A549 (cell line): ENCODE measurements at regions of chr12 and their contacts with region 1.

Region 1: DNA sequence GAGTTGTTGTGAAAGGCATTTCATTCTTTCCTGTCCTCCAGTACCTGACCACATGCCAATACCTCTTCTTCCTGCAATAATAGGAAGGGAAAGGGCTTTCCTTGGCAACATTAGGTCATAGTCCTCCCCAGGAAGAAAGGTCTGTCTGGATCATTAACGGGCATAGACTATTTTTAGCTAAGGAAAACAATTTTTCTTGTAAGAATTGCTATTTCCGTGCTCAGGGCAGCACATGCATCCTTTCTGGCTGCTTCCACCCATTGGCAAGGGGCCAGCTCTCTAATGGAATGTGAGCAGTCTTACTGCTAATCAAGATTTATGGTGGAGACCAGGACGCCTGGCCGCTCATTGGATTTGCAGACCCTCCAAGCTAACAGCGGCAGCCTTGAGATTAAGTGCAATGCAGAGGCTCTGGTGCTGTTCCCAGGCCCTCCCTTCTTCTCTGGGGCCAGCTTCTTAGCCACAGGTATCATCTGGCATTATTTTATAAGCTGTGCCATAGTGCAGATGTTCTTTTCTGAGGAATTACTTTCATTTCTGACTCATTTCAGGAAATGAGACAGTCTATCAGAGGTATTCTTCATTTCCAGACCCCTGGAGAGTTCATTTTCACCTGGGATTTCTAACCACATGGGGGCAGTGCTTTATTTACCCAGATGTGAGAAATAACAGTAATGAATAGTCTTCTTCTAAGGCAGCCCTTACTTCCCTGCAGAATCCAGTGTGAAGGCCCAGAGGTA is 52.9 kb downstream of the ANO6 start:
- DNase-seq: peak; percentile 35 to 64
- ATAC-seq: peak; percentile 63 to 71
- H3K4me3 ChIP-seq: no peak overlapping the region
- H3K27ac ChIP-seq: peak overlapping the region; percentile 55 to 68
- H3K4me1 ChIP-seq: peaks cover 49% of the 10 kb centered on the region
- CTCF ChIP-seq: peak; percentile 73
- EP300 ChIP-seq: no peak
- POLR2A ChIP-seq: no peak
- RAD21 ChIP-seq: peak; percentile 69

Region 2: GRCh38 chr12:45183246-45183645 is 85.6 kb before region 1 on chr12:
- CTCF ChIA-PET with region 1: interaction called, 10 read pairs
- POLR2A ChIA-PET with region 1: no interaction called
- DNase-seq: peak; percentile 12 to 13
- ATAC-seq: peak in 1 of 2 experiments; percentile 54; a peak in 2 of 6 replicates
- H3K4me3 ChIP-seq: no peak overlapping the region
- H3K27ac ChIP-seq: no peak overlapping the region
- H3K4me1 ChIP-seq: no peaks in the 10 kb centered on the region
- CTCF ChIP-seq: peak; percentile 52
- EP300 ChIP-seq: no peak
- POLR2A ChIP-seq: no peak
- RAD21 ChIP-seq: peak; percentile 72 to 73

Region 3: GRCh38 chr12:45234139-45234846 is 34.5 kb before region 1 on chr12:
- CTCF ChIA-PET with region 1: interaction called, 26 read pairs
- POLR2A ChIA-PET with region 1: interaction called, 3 read pairs
- DNase-seq: peak; percentile 84 to 91
- ATAC-seq: peak; percentile 77 to 79
- H3K4me3 ChIP-seq: peak overlapping the region; percentile 7; the same call in 1 of the 3 replicates
- H3K27ac ChIP-seq: peak overlapping the region; percentile 84 to 85
- H3K4me1 ChIP-seq: peaks cover 50% of the 10 kb centered on the region
- CTCF ChIP-seq: no peak
- EP300 ChIP-seq: peak in 1 of 2 experiments; percentile 66; a peak in 1 of 5 replicates
- POLR2A ChIP-seq: no peak
- RAD21 ChIP-seq: peak; percentile 18 to 39; a peak in 3 of 5 replicates

Region 4: GRCh38 chr12:45242189-45242588 is 26.7 kb before region 1 on chr12:
- CTCF ChIA-PET with region 1: interaction called, 12 read pairs
- POLR2A ChIA-PET with region 1: no interaction called
- DNase-seq: no peak
- ATAC-seq: no peak
- H3K4me3 ChIP-seq: no peak overlapping the region
- H3K27ac ChIP-seq: no peak overlapping the region
- H3K4me1 ChIP-seq: no peaks in the 10 kb centered on the region; the same call in 2 of the 3 replicates
- CTCF ChIP-seq: no peak
- EP300 ChIP-seq: no peak
- POLR2A ChIP-seq: no peak
- RAD21 ChIP-seq: no peak

Region 5: GRCh38 chr12:45279931-45280830 is 11.3 kb after region 1 on chr12:
- CTCF ChIA-PET with region 1: interaction called, 12 read pairs
- POLR2A ChIA-PET with region 1: no interaction called
- DNase-seq: no peak
- ATAC-seq: no peak
- H3K4me3 ChIP-seq: no peak overlapping the region
- H3K27ac ChIP-seq: peak overlapping the region in 1 of 2 experiments; percentile 18; a peak in 1 of 6 replicates
- H3K4me1 ChIP-seq: peaks cover 50% of the 10 kb centered on the region
- CTCF ChIP-seq: no peak
- EP300 ChIP-seq: no peak
- POLR2A ChIP-seq: no peak
- RAD21 ChIP-seq: no peak

Region 6: GRCh38 chr12:45290204-45290580 is 21.4 kb after region 1 on chr12:
- CTCF ChIA-PET with region 1: interaction called, 27 read pairs
- POLR2A ChIA-PET with region 1: no interaction called
- DNase-seq: peak in 1 of 2 experiments; percentile 38
- ATAC-seq: peak in 1 of 2 experiments; percentile 54; a peak in 3 of 6 replicates
- H3K4me3 ChIP-seq: no peak overlapping the region
- H3K27ac ChIP-seq: no peak overlapping the region
- H3K4me1 ChIP-seq: peaks cover 33% of the 10 kb centered on the region
- CTCF ChIP-seq: no peak
- EP300 ChIP-seq: no peak
- POLR2A ChIP-seq: no peak
- RAD21 ChIP-seq: no peak

Region 7: GRCh38 chr12:45324391-45324790 is 55.5 kb after region 1 on chr12:
- CTCF ChIA-PET with region 1: no interaction called
- POLR2A ChIA-PET with region 1: no interaction called
- DNase-seq: no peak
- ATAC-seq: no peak
- H3K4me3 ChIP-seq: no peak overlapping the region
- H3K27ac ChIP-seq: no peak overlapping the region
- H3K4me1 ChIP-seq: no peaks in the 10 kb centered on the region
- CTCF ChIP-seq: no peak
- EP300 ChIP-seq: no peak
- POLR2A ChIP-seq: no peak
- RAD21 ChIP-seq: no peak

Region 8: DNA sequence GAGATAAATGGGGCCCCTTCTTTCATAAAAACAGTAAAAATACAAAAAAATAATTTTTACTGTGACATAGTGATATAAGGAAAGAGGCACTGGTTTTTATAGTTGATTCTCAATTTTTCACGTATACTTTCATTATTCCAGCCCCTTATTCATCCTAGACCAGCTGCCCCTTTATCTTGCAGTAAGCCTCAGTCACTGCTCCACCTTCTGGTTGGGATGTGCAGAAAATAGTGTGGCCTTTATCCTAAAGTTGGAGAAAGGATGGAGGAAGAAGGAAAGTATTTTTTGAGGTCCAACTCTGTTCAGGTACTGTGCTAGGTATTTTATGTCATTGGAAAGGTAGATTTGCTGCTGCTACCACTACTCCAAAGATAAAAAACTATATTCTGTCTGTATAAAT is 119.7 kb after region 1 on chr12:
- CTCF ChIA-PET with region 1: interaction called, 28 read pairs
- POLR2A ChIA-PET with region 1: no interaction called
- DNase-seq: peak; percentile 51 to 54
- ATAC-seq: peak; percentile 82 to 89
- H3K4me3 ChIP-seq: no peak overlapping the region
- H3K27ac ChIP-seq: no peak overlapping the region
- H3K4me1 ChIP-seq: no peaks in the 10 kb centered on the region
- CTCF ChIP-seq: peak; percentile 78
- EP300 ChIP-seq: no peak
- POLR2A ChIP-seq: no peak
- RAD21 ChIP-seq: peak; percentile 74 to 84

Region 9: DNA sequence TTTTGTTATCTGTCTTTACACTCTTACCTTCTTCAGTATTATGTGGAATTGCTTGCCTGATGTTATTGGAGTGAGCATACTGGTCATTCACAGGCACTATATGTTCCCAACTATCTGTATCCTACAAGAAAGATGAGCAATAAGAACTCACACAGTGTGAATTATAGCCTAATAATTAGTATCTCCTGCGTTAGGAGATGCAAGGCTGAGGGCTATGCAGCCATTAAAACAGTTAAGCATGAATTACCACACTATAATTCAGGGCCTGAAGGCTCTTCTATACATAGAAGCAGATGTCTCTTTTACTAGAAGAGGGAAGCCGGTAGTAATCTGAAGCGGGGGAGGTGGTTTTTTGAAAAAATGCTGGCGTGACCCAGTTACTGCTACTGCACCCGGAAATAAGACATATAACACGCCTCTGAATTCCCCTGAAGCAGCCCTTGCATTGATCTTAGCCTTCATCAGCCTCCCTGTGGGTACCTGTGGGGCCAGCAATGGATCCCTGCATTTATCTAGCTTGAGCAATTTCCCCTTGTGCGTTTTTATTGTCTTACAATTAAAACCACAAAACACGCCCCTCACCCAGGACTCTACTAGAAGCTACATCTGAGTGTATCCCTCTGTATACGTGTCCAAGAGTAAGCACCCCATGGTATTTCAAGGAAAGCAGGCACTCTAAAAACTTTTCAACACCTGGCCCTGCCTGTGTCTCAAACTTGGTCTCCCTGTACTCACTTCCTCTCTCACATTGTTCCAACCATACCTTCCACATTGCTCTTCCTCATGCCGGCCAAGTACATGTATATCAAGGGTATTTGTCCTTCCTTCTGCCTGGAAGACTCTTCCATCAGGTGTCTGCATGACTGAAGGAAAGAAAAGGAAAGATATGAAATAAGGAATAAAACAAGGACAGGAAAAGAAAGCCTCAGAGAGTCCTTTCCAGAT is 249.7 kb after region 1 on chr12:
- CTCF ChIA-PET with region 1: no interaction called
- POLR2A ChIA-PET with region 1: no interaction called
- DNase-seq: no peak
- ATAC-seq: no peak
- H3K4me3 ChIP-seq: no peak overlapping the region
- H3K27ac ChIP-seq: no peak overlapping the region
- H3K4me1 ChIP-seq: no peaks in the 10 kb centered on the region
- CTCF ChIP-seq: no peak
- EP300 ChIP-seq: no peak
- POLR2A ChIP-seq: no peak
- RAD21 ChIP-seq: no peak

Region 10: DNA sequence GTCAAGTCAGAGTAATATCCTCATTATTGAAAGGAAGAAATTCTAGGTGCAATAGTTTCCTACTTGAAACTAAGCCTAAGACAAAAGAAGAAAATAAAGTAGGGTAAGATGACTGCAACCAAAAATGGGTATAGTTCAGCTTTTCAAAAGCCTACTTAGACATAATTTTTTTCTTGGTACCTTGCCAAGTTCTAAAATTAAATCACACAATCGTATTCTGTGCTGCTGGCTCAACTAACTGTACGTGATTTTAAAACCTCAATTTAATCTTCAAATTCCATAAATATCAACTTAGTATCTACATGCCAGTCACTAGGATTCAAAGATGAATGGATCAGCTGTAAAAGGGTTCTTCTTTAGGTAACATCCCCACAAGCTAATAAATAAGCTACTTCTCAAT is 664.7 kb after region 1 on chr12:
- CTCF ChIA-PET with region 1: no interaction called
- POLR2A ChIA-PET with region 1: no interaction called
- DNase-seq: no peak
- ATAC-seq: no peak
- H3K4me3 ChIP-seq: no peak overlapping the region
- H3K27ac ChIP-seq: no peak overlapping the region
- H3K4me1 ChIP-seq: no peaks in the 10 kb centered on the region
- CTCF ChIP-seq: no peak
- EP300 ChIP-seq: no peak
- POLR2A ChIP-seq: no peak
- RAD21 ChIP-seq: no peak